Activated naive CD4-positive, alpha-beta T cell treated with anti-CD3 and anti-CD28 coated beads for 36 hours (primary cell): ENCODE measurements at regions of chr6 and their contacts with region 1.

Region 1: GRCh38 chr6:158213925-158214674 is 46.0 kb downstream of the GTF2H5 start:
- DNase-seq: peak; percentile 68
- H3K4me3 Mint-ChIP-seq: no peak overlapping the region
- H3K27ac Mint-ChIP-seq: no peak overlapping the region
- H3K4me1 Mint-ChIP-seq: peaks cover 8% of the 10 kb centered on the region
- H3K27me3 Mint-ChIP-seq: no peaks in the 10 kb centered on the region

Region 2: GRCh38 chr6:158605266-158605878 is 391.3 kb after region 1 on chr6:
- CTCF ChIA-PET with region 1: interaction called, 17 read pairs
- intact Hi-C with region 1: loop called (anchors 1 kb)
- DNase-seq: peak; percentile 81
- H3K4me3 Mint-ChIP-seq: no peak overlapping the region
- H3K27ac Mint-ChIP-seq: no peak overlapping the region
- H3K4me1 Mint-ChIP-seq: no peaks in the 10 kb centered on the region
- H3K27me3 Mint-ChIP-seq: no peaks in the 10 kb centered on the region

Region 3: DNA sequence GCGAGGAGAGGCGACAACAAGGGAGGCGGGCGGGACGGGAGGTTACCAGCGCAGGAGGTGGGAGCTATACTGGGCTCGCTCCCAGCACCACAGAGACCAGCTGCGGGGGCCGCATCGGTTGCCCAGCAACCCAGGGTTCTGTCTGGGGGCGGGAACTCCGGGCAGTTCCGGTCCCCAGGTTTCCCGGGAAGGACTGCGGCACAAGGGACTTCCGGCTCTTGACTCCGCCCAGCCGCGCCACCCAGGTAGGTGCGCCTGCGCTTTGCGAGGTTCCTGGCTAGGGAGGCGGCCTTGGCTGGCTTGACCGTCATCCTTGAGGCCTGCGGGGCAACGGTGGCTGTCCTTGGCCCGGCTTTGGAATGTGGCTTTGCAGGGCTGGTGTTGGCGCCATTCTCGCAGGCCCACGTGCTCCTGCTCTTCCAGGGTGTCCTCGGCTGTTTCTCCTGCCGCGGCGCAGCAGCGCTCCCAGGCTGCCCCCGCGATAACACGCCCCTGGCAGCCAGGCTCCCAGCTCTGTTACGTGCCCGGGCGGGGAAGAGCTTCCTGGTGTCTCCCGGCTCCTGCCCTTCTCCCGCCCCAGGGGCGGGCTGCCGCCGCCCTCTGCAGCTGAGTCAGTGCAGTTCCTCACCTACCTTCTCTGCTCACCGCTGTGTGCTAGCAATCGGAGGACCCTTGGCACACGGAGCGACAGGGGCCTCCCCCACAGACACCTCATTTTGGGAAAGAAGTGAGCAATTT is 785.7 kb after region 1 on chr6 and contains the start of gene RSPH3:
- CTCF ChIA-PET with region 1: no interaction called
- intact Hi-C with region 1: loop called (anchors 5 kb)
- DNase-seq: peak; percentile 94
- H3K4me3 Mint-ChIP-seq: peak within 1 kb of the TSS; percentile 98
- H3K27ac Mint-ChIP-seq: peak within 1 kb of the TSS; percentile 82
- H3K4me1 Mint-ChIP-seq: peaks cover 45% of the 10 kb centered on the region
- H3K27me3 Mint-ChIP-seq: no peaks in the 10 kb centered on the region
- total RNA-seq, gene RSPH3: 3.0 to 3.2 TPM